Activated CD4-positive, alpha-beta memory T cell treated with anti-CD3 and anti-CD28 coated beads for 36 hours (primary cell): ENCODE measurements at regions of chr1 and their contacts with region 1.

Region 1: GRCh38 chr1:204431310-204432165 is 19.9 kb upstream of the PPP1R15B start:
- DNase-seq: peak; percentile 87
- H3K4me3 Mint-ChIP-seq: no peak overlapping the region
- H3K27ac Mint-ChIP-seq: no peak overlapping the region
- H3K4me1 Mint-ChIP-seq: peaks cover 8% of the 10 kb centered on the region
- H3K27me3 Mint-ChIP-seq: no peaks in the 10 kb centered on the region

Region 2: GRCh38 chr1:204411451-204412204 is 19.9 kb before region 1 on chr1 and contains the start of gene PPP1R15B:
- CTCF ChIA-PET with region 1: interaction called, 25 read pairs
- POLR2A ChIA-PET with region 1: interaction called, 3 read pairs
- intact Hi-C with region 1: no loop called
- DNase-seq: peak; percentile 99
- H3K4me3 Mint-ChIP-seq: peak within 1 kb of the TSS; percentile 99
- H3K27ac Mint-ChIP-seq: peak within 1 kb of the TSS; percentile 98
- H3K4me1 Mint-ChIP-seq: peaks cover 12% of the 10 kb centered on the region
- H3K27me3 Mint-ChIP-seq: no peaks in the 10 kb centered on the region
- total RNA-seq, gene PPP1R15B: 54.9 to 57.1 TPM

Region 3: DNA sequence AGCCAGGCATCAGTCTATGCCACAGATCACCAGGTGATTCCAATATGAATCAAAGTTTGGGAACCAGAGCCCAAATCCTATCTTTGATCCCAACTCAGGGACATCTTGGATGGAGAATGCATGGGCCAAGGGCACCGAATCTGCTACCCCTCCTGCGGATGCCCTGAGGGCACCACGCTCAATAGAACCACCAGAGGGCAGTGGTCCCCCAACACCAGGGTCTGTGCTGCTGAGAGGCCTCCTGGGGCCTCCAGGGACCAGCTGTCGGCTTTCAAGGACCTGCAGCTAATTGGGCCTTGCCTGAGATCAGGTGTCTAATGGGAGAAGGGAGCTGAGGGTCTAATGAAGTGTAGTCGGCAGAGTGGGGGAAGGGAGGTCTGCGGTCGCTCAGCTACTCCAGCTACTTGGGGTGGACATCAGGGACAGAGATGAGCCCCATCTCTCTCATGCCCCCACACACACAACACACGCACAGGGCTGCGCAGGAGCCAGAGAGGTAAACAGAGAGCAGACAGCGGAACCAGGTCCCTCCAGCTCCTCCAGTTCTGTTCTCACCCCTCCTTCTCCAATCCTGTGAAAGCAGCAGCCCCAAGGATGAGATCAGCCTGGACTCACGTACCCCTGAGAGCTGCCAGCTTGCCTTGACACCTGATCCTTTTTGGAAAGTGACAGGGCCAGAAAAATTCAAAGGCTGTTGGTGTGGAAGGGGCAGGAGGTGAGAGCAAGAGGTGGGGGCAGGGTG is 15.0 kb after region 1 on chr1:
- CTCF ChIA-PET with region 1: interaction called, 194 read pairs
- POLR2A ChIA-PET with region 1: interaction called, 3 read pairs
- intact Hi-C with region 1: no loop called
- DNase-seq: peak; percentile 86
- H3K4me3 Mint-ChIP-seq: no peak overlapping the region
- H3K27ac Mint-ChIP-seq: peak overlapping the region; percentile 76
- H3K4me1 Mint-ChIP-seq: peaks cover 77% of the 10 kb centered on the region
- H3K27me3 Mint-ChIP-seq: no peaks in the 10 kb centered on the region

Region 4: GRCh38 chr1:204465546-204466415 is 34.2 kb after region 1 on chr1:
- CTCF ChIA-PET with region 1: interaction called, 16 read pairs
- POLR2A ChIA-PET with region 1: no interaction called
- intact Hi-C with region 1: no loop called
- DNase-seq: no peak
- H3K4me3 Mint-ChIP-seq: no peak overlapping the region
- H3K27ac Mint-ChIP-seq: peak overlapping the region; percentile 39
- H3K4me1 Mint-ChIP-seq: peaks cover 60% of the 10 kb centered on the region
- H3K27me3 Mint-ChIP-seq: no peaks in the 10 kb centered on the region

Region 5: DNA sequence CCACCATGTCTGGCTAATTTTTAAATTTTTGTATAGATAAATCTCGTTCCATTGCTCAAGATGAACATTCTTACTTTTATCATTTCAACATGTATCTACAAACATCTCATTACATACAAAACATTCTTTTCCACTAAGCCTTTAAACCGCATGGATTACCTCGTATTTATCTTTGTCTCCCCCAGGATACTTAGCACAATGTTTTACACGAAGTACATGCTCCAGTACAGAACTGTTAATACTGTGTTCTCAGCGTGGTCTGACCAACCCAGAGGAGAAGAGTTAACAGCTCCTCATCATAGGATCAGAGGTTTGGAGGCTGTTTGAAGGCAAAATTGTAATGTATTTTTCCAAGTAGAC is 55.7 kb after region 1 on chr1:
- CTCF ChIA-PET with region 1: interaction called, 1,224 read pairs
- POLR2A ChIA-PET with region 1: no interaction called
- intact Hi-C with region 1: no loop called
- DNase-seq: no peak
- H3K4me3 Mint-ChIP-seq: no peak overlapping the region
- H3K27ac Mint-ChIP-seq: no peak overlapping the region
- H3K4me1 Mint-ChIP-seq: peaks cover 64% of the 10 kb centered on the region
- H3K27me3 Mint-ChIP-seq: no peaks in the 10 kb centered on the region